Left ventricle myocardium inferior (tissue), 1 donor: ENCODE measurements at regions of chr1 and their contacts with region 1.

Region 1: DNA sequence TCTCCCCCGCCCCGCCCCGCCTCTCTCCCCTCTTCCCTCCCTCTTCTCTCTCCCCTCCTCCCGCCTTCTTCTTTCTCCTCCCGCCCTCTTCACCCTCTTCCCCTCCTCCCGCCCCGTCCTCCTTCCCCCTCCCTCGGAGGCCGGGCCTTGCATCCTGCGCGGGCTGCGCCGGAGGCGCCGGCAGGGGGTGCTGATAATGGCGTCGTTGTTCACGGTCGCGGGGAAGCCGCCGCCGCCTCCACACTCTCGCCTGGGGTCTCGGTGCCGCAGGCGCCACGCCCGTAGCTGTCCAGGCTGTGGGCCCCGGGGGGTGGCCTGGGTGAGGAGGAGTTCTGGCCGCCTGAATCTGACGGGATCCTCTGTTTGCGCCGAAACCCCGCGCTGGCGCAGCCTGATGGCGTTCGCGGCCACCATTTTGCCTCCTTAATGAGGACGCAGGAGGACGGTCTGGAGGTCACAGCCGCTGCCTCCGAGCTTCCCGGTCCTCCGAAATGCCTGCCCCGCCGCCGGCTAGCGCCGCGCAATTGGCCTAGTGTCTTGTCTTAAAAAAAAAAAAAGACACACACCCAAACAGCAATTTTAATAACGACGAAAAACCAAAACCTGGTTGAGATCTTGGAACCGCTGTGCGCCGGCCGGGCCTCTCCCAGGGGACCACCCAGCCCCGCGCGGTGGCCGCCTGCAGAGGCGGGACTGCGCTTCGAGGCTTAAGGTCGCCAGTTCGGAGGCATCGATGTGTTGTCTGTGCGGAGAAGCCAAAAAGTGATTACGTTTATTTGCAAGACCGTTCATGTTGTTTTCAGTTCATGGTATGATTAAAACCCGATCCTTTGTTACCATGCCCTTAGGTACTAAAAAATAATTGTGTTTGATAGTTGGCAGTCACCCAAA is 106.6 kb upstream of the HNRNPU start:
- DNase-seq: peak; percentile 93
- H3K4me3 ChIP-seq: peak overlapping the region; percentile 81
- H3K27ac ChIP-seq: peak overlapping the region; percentile 100
- H3K4me1 ChIP-seq: peaks cover 40% of the 10 kb centered on the region
- H3K27me3 ChIP-seq: no peaks in the 10 kb centered on the region
- CTCF ChIP-seq: peak; percentile 69

Region 2: DNA sequence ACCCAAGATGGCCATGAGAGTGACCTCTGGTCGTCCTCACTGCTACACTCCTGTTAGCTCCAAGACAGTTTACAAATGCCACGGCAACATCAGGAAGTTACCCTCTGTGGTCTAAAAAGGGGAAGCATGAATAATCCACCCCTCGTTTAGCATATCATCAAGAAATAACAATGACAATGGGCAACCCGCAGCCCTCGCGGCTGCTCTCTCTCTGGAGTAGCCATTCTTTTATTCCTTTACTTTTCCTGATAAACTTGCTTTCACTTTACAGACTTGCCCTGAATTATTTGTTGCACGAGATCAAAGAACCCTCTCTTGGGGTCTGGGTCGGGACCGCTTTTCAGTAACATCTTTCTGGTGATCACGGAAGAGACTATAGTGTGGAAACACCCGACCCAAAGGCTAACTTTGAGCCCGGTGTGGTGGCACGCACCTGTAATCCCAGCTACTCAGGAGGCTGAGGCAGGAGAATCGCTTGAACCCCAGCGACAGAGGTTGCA is 155.3 kb before region 1 on chr1:
- intact Hi-C with region 1: no loop called
- DNase-seq: no peak
- H3K4me3 ChIP-seq: peak overlapping the region; percentile 30
- H3K27ac ChIP-seq: no peak overlapping the region
- H3K4me1 ChIP-seq: no peaks in the 10 kb centered on the region
- H3K27me3 ChIP-seq: peaks cover 21% of the 10 kb centered on the region
- CTCF ChIP-seq: no peak

Region 3: GRCh38 chr1:244835276-244836134 is 135.4 kb before region 1 on chr1 and contains the start of gene COX20:
- intact Hi-C with region 1: loop called (anchors 10 kb)
- DNase-seq: peak; percentile 90
- H3K4me3 ChIP-seq: peak within 1 kb of the TSS; percentile 79
- H3K27ac ChIP-seq: peak within 1 kb of the TSS; percentile 99
- H3K4me1 ChIP-seq: peaks cover 61% of the 10 kb centered on the region
- H3K27me3 ChIP-seq: no peaks in the 10 kb centered on the region
- CTCF ChIP-seq: peak; percentile 16
- total RNA-seq, gene COX20: 68.8 TPM

Region 4: DNA sequence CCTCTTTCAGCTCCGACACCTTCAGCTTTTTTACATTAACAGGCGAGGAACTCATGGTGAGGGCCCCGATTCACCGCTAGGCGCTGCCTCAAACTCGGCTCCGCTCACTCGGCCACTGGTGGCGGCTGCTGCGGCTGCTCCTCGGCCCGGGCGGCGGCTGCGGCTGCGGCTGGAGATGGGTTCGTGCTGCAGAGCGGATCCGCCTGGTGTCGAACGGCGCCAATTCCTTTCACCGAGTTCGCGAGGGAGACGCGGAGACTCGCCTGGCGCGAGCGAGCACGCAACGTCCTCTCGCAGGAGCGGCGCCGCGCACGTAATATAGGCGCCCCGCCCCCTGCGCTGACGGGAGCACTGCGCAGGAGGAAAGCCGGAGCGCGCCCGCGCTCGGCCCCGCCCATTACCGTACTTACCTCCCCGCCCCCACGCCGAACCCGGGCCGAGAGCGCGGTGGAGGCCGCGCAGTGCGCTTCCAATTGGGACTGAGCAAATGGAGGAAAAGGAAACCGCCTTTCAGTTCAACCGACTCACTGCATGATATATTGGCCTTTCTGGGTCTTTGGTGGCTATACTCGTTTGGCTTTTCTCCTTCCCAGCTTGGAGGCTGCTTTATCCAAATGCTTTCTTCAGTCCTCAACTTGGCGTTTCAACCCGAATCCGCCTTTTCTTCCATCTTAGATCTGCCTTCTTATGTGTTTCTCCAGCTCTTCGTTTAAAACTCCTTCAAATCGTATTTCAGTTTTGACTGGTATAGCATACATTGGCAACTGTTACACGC is 106.5 kb before region 1 on chr1 and contains the start of gene HNRNPU:
- intact Hi-C with region 1: loop called (anchors 2 kb)
- DNase-seq: peak; percentile 98
- H3K4me3 ChIP-seq: peak within 1 kb of the TSS; percentile 99
- H3K27ac ChIP-seq: peak within 1 kb of the TSS; percentile 100
- H3K4me1 ChIP-seq: peaks cover 68% of the 10 kb centered on the region
- H3K27me3 ChIP-seq: no peaks in the 10 kb centered on the region
- CTCF ChIP-seq: peak; percentile 52
- total RNA-seq, gene HNRNPU: 167 TPM

Region 5: DNA sequence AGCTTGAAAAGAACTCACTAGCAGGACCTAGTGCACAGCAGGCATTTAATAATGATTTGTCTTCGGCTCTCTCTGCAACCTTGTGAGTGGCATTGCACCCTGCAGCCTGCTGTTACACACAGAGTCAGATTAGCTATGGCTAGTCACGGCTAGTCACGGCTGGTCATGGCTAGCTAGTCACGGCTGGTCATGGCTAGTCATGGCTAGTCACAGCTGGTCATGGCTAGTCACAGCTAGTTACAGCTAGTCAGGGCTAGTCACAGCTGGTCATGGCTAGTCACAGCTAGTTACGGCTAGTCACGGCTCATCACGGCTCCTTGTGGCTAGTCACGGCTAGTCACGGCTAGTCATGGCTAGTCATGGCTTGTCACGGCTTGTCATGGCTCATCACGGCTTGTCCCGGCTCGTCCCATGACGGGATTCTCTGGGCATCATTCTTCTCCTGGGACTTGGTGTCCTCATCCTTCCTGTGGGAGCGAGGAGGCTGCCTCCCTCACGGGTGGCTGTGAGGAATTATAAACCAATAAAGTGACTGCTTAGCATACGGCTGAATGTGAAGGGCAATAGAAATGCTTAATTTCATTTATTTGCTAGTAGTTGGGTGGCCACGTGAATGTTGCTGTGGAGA is 171.4 kb after region 1 on chr1:
- intact Hi-C with region 1: no loop called
- DNase-seq: no peak
- H3K4me3 ChIP-seq: no peak overlapping the region
- H3K27ac ChIP-seq: no peak overlapping the region
- H3K4me1 ChIP-seq: no peaks in the 10 kb centered on the region
- H3K27me3 ChIP-seq: peaks cover 11% of the 10 kb centered on the region
- CTCF ChIP-seq: no peak

Region 6: DNA sequence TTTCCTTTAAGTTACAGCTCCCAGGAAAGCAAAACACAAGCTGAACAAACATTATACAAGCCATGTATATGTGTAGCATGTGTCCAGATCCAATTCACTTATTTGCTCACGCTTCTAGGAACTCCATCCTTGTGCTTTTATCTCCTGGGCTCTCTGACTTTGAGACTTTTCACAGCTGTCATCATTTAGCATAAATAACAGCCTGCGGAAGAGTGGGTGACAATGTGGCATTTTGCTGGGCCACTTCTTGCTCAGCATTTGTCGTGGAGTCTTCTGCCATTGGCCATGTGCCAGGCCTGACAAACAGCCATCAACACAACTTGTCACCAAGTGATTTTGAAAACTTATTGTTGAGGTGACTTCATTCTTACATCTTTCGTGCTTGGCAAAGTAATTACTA is 348.2 kb after region 1 on chr1:
- intact Hi-C with region 1: no loop called
- DNase-seq: no peak
- H3K4me3 ChIP-seq: no peak overlapping the region
- H3K27ac ChIP-seq: no peak overlapping the region
- H3K4me1 ChIP-seq: peaks cover 20% of the 10 kb centered on the region
- H3K27me3 ChIP-seq: no peaks in the 10 kb centered on the region
- CTCF ChIP-seq: no peak